ENCODE measurements at regions of chr2 and their contacts with region 1.

Region 1: GRCh38 chr2:54558188-54559005 is 102.3 kb downstream of the SPTBN1 start:
- DNase-seq: peak; percentile 80
- ATAC-seq: peak; percentile 65
- H3K4me3 ChIP-seq: peak overlapping the region; percentile 91 to 99 (median 97)
- H3K4me3 Mint-ChIP-seq: peak overlapping the region; percentile 94
- H3K27ac ChIP-seq: peak overlapping the region; percentile 81 to 92
- H3K27ac Mint-ChIP-seq: peak overlapping the region; percentile 90
- H3K4me1 ChIP-seq: peaks cover 30 to 35% of the 10 kb centered on the region in 2 donors
- H3K4me1 Mint-ChIP-seq: peaks cover 54% of the 10 kb centered on the region
- H3K27me3 ChIP-seq: no peaks in the 10 kb centered on the region
- H3K27me3 Mint-ChIP-seq: no peaks in the 10 kb centered on the region
- CTCF ChIP-seq: no peak

Region 2: GRCh38 chr2:54545702-54546450 is 12.5 kb before region 1 on chr2:
- CTCF ChIA-PET with region 1: interaction called, 7 read pairs
- POLR2A ChIA-PET with region 1: no interaction called
- intact Hi-C with region 1: loop called (anchors 2 kb)
- DNase-seq: no peak
- ATAC-seq: no peak
- H3K4me3 ChIP-seq: no peak overlapping the region
- H3K4me3 Mint-ChIP-seq: no peak overlapping the region
- H3K27ac ChIP-seq: no peak overlapping the region
- H3K27ac Mint-ChIP-seq: peak overlapping the region; percentile 39
- H3K4me1 ChIP-seq: peaks cover 2 to 5% of the 10 kb centered on the region in 2 donors
- H3K4me1 Mint-ChIP-seq: peaks cover 10% of the 10 kb centered on the region
- H3K27me3 ChIP-seq: no peaks in the 10 kb centered on the region
- H3K27me3 Mint-ChIP-seq: no peaks in the 10 kb centered on the region
- CTCF ChIP-seq: no peak

Region 3: GRCh38 chr2:54579684-54580620 is 21.6 kb after region 1 on chr2:
- CTCF ChIA-PET with region 1: interaction called, 56 read pairs
- POLR2A ChIA-PET with region 1: interaction called, 26 read pairs
- intact Hi-C with region 1: loop called (anchors 2 kb)
- DNase-seq: peak; percentile 65
- ATAC-seq: peak; percentile 44
- H3K4me3 ChIP-seq: peak overlapping the region in 1 of 5 experiments; percentile 34
- H3K4me3 Mint-ChIP-seq: peak overlapping the region; percentile 77
- H3K27ac ChIP-seq: peak overlapping the region; percentile 77 to 85
- H3K27ac Mint-ChIP-seq: peak overlapping the region; percentile 93
- H3K4me1 ChIP-seq: peaks cover 89 to 91% of the 10 kb centered on the region in 2 donors
- H3K4me1 Mint-ChIP-seq: peaks cover 93% of the 10 kb centered on the region
- H3K27me3 ChIP-seq: no peaks in the 10 kb centered on the region
- H3K27me3 Mint-ChIP-seq: no peaks in the 10 kb centered on the region
- CTCF ChIP-seq: no peak

Region 4: GRCh38 chr2:54597153-54597848 is 38.9 kb after region 1 on chr2:
- CTCF ChIA-PET with region 1: interaction called, 8 read pairs
- POLR2A ChIA-PET with region 1: interaction called, 6 read pairs
- intact Hi-C with region 1: loop called (anchors 1 kb)
- DNase-seq: no peak
- ATAC-seq: peak; percentile 18
- H3K4me3 ChIP-seq: peak overlapping the region in 1 of 5 experiments; percentile 38
- H3K4me3 Mint-ChIP-seq: peak overlapping the region; percentile 67
- H3K27ac ChIP-seq: peak overlapping the region in 1 of 2 donors; percentile 71
- H3K27ac Mint-ChIP-seq: peak overlapping the region; percentile 80
- H3K4me1 ChIP-seq: peaks cover 74 to 81% of the 10 kb centered on the region in 2 donors
- H3K4me1 Mint-ChIP-seq: peaks cover 93% of the 10 kb centered on the region
- H3K27me3 ChIP-seq: no peaks in the 10 kb centered on the region
- H3K27me3 Mint-ChIP-seq: no peaks in the 10 kb centered on the region
- CTCF ChIP-seq: no peak

Region 5: DNA sequence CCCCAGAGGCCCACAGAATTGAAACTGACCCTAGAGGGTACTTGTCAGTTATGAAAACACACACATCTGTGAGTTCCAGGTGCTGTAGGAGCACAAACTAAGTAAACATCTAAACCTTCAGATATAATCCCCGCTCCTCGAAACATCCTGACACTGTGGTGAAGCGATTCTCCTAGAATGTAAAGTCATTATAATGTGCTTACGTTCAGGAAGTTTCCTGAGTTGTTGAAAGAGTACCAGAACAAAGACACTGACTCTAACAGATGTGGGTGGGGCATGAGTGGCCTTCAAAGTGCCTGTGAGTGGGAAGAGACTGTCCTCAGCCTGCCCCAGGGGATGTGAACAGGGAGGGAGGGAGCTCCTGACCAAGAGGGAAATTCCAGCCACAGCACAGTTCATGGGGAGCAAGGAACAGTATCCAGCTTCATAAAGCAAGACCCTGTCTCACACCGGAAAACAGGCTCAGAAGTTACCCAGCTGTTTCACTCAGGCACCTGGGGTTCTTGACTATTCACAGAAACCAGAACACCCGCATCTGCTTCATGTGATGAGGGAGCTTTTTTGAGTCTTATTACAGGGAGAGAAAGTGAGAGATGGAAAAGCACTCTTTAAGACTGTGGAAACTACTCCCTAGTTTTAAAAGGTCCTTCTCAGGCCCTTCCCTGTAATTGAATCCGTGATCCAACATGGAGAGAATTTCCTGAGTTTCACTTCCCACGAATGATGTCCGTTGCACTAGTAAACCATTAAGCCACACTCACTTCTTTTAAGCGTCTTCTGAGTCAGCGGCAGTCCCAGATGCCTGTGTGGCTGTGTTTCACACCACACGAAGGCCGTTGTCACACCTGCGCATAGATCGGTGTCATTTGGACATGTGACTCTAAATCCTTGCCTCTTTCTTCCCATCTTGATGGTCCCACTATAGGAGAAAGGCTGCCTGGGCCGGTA is 76.4 kb after region 1 on chr2:
- CTCF ChIA-PET with region 1: interaction called, 8 read pairs
- POLR2A ChIA-PET with region 1: interaction called, 11 read pairs
- intact Hi-C with region 1: loop called (anchors 2 kb)
- DNase-seq: peak; percentile 68
- ATAC-seq: peak; percentile 65
- H3K4me3 ChIP-seq: no peak overlapping the region
- H3K4me3 Mint-ChIP-seq: peak overlapping the region; percentile 67
- H3K27ac ChIP-seq: peak overlapping the region; percentile 46 to 85
- H3K27ac Mint-ChIP-seq: peak overlapping the region; percentile 94
- H3K4me1 ChIP-seq: peaks cover 35 to 42% of the 10 kb centered on the region in 2 donors
- H3K4me1 Mint-ChIP-seq: peaks cover 60% of the 10 kb centered on the region
- H3K27me3 ChIP-seq: no peaks in the 10 kb centered on the region
- H3K27me3 Mint-ChIP-seq: no peaks in the 10 kb centered on the region
- CTCF ChIP-seq: no peak

Region 6: GRCh38 chr2:54763636-54764291 is 205.4 kb after region 1 on chr2:
- CTCF ChIA-PET with region 1: no interaction called
- POLR2A ChIA-PET with region 1: no interaction called
- intact Hi-C with region 1: no loop called
- DNase-seq: no peak
- ATAC-seq: no peak
- H3K4me3 ChIP-seq: no peak overlapping the region
- H3K4me3 Mint-ChIP-seq: no peak overlapping the region
- H3K27ac ChIP-seq: no peak overlapping the region
- H3K27ac Mint-ChIP-seq: no peak overlapping the region
- H3K4me1 ChIP-seq: peaks cover 7 to 13% of the 10 kb centered on the region in 2 donors
- H3K4me1 Mint-ChIP-seq: peaks cover 22% of the 10 kb centered on the region
- H3K27me3 ChIP-seq: no peaks in the 10 kb centered on the region
- H3K27me3 Mint-ChIP-seq: no peaks in the 10 kb centered on the region
- CTCF ChIP-seq: no peak